H1 (cell line): ENCODE measurements at regions of chr4 and their contacts with region 1.

Region 1: DNA sequence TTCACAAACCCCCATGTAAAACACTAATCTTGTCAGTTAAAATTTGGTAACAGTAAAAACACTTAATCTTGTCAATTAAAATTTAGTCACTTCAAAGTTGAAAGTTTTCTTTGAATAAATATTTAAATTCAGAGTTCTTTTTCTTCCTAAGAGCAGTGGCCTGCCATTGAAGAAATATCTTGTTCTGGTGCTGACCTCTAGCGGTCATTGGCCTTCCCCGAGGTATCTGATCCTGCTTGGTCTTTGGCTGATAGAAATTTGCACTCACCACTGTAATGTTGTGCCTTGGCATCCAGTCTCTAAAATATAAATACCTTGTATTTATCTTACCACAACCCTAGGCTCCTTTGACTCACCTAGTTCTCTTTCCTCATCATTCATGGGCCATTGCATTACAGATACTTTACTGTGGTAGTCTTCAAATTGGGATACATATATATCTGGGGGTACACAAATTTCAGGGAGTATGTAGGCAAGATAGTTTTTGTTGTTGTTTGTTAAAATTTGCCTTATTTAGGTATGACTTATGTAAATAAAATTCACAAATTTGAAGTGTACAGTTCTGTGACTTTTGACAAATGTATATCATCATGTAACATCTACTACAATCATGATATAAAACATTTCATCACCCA is 6.7 kb upstream of the ART3 start:
- DNase-seq: peak in 1 of 2 experiments; percentile 71
- H3K4me3 ChIP-seq: no peak overlapping the region
- H3K27ac ChIP-seq: no peak overlapping the region
- H3K4me1 ChIP-seq: peaks cover 0 to 5% (median 4%) of the 10 kb centered on the region in 4 experiments; a peak in 4 of 7 replicates
- H3K27me3 ChIP-seq: no peaks in the 10 kb centered on the region
- CTCF ChIP-seq: peak; percentile 42 to 79 (median 78)
- EP300 ChIP-seq: no peak
- POLR2A ChIP-seq: no peak
- RAD21 ChIP-seq: peak; percentile 88 to 90

Region 2: DNA sequence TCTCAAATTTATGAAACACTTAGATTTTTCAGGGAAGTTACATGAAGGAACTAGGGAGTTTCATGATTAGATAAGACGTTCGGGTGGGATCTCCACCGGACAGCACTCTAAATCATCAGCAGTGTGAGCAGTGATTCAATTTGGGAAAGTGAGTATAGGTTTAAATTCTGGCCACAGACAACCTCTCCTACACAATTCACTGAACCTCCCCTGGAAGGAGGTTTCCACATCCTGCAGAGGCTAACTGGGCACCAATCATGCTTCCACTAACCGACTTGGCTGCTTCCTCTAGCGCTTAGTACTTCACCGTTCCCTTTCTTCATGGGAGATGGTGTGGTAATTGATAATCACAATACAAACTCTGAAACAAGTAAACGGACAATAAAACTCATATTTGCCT is 66.1 kb before region 1 on chr4:
- CTCF ChIA-PET with region 1: interaction called, 88 read pairs
- POLR2A ChIA-PET with region 1: no interaction called
- DNase-seq: no peak
- H3K4me3 ChIP-seq: no peak overlapping the region
- H3K27ac ChIP-seq: no peak overlapping the region
- H3K4me1 ChIP-seq: no peaks in the 10 kb centered on the region
- H3K27me3 ChIP-seq: no peaks in the 10 kb centered on the region
- CTCF ChIP-seq: no peak
- EP300 ChIP-seq: no peak
- POLR2A ChIP-seq: no peak
- RAD21 ChIP-seq: no peak

Region 3: GRCh38 chr4:76055016-76055415 is 12.8 kb before region 1 on chr4:
- CTCF ChIA-PET with region 1: interaction called, 10 read pairs
- POLR2A ChIA-PET with region 1: no interaction called
- DNase-seq: no peak
- H3K4me3 ChIP-seq: no peak overlapping the region
- H3K27ac ChIP-seq: no peak overlapping the region
- H3K4me1 ChIP-seq: peaks cover 0 to 13% (median 10%) of the 10 kb centered on the region in 4 experiments; a peak in 4 of 7 replicates
- H3K27me3 ChIP-seq: no peaks in the 10 kb centered on the region
- CTCF ChIP-seq: no peak
- EP300 ChIP-seq: no peak
- POLR2A ChIP-seq: no peak
- RAD21 ChIP-seq: no peak

Region 4: DNA sequence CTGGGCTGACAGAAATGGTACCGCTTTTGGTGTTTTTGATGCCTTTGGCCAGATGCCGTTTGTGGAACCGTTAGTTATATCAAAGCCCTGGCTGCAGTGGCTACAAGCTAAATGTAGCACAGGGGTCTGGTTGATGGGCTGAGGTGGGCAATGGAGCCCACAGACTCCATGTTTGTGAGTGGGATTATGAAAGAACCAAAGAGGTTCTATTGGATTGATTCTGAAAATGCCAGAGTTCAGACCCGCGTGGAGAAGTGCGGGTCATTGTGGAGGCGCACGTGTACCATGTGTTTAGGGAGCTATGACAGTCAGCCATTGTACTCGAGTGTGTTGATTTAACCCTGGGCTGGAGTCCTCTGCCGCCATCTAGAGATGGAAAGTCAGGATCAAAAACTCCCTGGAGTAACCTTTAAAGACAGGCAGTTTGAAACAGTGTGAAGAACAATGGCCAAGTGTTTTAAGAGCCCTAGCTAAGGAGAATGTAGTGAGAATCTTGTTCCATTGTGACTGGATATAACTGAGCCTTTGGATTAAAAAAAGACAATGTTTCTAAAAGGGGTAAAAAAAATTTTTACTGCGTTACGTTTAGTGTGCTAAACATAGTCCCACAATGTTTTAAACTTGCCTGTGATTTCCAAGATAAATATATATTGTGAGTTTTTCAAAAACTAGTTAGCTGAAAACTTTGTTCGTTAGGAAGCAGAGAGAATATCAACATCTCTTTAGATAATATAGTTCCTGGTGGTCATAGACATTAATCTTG is 19.4 kb after region 1 on chr4:
- CTCF ChIA-PET with region 1: interaction called, 14 read pairs
- POLR2A ChIA-PET with region 1: interaction called, 3 read pairs
- DNase-seq: peak; percentile 59 to 64
- H3K4me3 ChIP-seq: peak overlapping the region in 1 of 4 experiments; percentile 34; a peak in 1 of 8 replicates
- H3K27ac ChIP-seq: no peak overlapping the region
- H3K4me1 ChIP-seq: no peaks in the 10 kb centered on the region
- H3K27me3 ChIP-seq: no peaks in the 10 kb centered on the region
- CTCF ChIP-seq: peak; percentile 22 to 80 (median 67)
- EP300 ChIP-seq: no peak
- POLR2A ChIP-seq: no peak
- RAD21 ChIP-seq: peak; percentile 88 to 90

Region 5: DNA sequence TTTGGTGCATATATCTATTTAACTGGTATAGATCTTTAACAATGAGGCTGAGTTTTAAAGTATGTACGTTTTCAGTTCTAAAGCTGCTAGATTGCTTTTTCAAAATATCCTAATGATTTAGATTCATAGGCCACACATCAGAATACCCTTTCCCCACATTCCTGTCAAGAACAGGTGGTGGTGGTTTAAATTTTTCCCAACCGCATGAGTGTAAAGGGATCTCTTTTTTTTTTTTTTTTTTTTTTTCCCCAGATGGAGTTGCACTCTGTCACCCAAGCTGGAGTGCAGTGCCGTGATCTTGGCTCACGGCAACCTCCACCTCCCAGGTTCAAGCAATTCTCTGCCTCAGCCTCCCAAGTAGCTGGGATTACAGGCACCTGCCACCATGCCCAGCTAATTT is 52.4 kb after region 1 on chr4:
- CTCF ChIA-PET with region 1: no interaction called
- POLR2A ChIA-PET with region 1: no interaction called
- DNase-seq: no peak
- H3K4me3 ChIP-seq: no peak overlapping the region
- H3K27ac ChIP-seq: no peak overlapping the region
- H3K4me1 ChIP-seq: no peaks in the 10 kb centered on the region
- H3K27me3 ChIP-seq: no peaks in the 10 kb centered on the region
- CTCF ChIP-seq: no peak
- EP300 ChIP-seq: no peak
- POLR2A ChIP-seq: no peak
- RAD21 ChIP-seq: no peak

Region 6: GRCh38 chr4:76246025-76246424 is 178.3 kb after region 1 on chr4:
- CTCF ChIA-PET with region 1: no interaction called
- POLR2A ChIA-PET with region 1: no interaction called
- DNase-seq: no peak
- H3K4me3 ChIP-seq: no peak overlapping the region
- H3K27ac ChIP-seq: no peak overlapping the region
- H3K4me1 ChIP-seq: peaks cover 0 to 2% (median under 1%) of the 10 kb centered on the region in 4 experiments; a peak in 5 of 7 replicates
- H3K27me3 ChIP-seq: peaks cover 0 to 2% (median under 1%) of the 10 kb centered on the region in 4 experiments; a peak in 3 of 7 replicates
- CTCF ChIP-seq: no peak
- EP300 ChIP-seq: no peak
- POLR2A ChIP-seq: no peak
- RAD21 ChIP-seq: peak in 1 of 2 experiments; percentile 38; a peak in 2 of 4 replicates